ENCODE measurements at regions of chrX and their contacts with region 1.

Region 1: GRCh38 chrX:71998836-71999509 is 88.3 kb downstream of the NHSL2 start:
- H3K4me3 ChIP-seq: no peak overlapping the region
- H3K27ac ChIP-seq: no peak overlapping the region
- H3K4me1 ChIP-seq: no peaks in the 10 kb centered on the region
- CTCF ChIP-seq: no peak

Region 2: DNA sequence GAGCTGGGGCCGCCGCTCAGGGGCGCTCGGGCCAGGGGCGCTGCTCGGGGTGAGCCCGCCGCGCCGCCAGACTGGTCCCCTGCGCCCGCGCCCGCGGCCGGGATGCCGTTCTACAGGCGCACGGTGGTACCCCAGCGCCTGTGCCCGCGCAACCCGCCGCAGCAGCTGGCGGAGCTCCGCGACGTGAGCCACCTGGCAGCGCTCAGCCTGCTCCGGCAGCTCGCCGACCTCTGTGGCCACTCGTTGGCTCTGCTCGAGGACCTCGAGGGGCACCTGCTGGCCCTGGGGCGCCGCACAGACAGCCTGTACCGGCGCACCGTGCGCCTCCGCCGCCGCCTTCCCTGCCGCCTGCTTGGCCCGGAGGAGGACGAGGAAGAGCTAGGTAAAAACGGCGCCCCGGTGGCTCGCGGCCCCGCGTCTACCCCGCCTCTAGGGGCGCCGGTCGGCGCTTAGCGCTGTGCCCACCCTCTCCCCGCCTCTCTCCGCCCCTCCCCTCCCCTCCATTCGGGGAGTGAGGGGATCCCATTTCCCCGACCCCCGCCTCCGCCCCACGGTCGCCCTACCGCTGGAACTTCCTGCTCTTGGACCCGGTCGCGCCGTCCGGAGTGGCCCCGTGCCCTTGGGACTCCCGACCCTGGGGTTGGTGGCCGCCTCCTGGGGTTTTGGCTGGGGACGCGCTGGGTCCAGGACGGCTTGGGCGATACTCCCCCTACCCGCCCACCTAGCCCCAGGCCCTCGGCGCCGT is 87.8 kb before region 1 on chrX:
- CTCF ChIA-PET with region 1: interaction called, 10 read pairs
- POLR2A ChIA-PET with region 1: no interaction called
- H3K4me3 ChIP-seq: peak overlapping the region; percentile 31
- H3K27ac ChIP-seq: peak overlapping the region; percentile 53; the same call in 1 of the 2 replicates
- H3K4me1 ChIP-seq: no peaks in the 10 kb centered on the region
- CTCF ChIP-seq: peak; percentile 67; the same call in 1 of the 2 replicates

Measured in HEK293 (cell line).